ENCODE measurements at regions of chr5 and their contacts with region 1.

Region 1: DNA sequence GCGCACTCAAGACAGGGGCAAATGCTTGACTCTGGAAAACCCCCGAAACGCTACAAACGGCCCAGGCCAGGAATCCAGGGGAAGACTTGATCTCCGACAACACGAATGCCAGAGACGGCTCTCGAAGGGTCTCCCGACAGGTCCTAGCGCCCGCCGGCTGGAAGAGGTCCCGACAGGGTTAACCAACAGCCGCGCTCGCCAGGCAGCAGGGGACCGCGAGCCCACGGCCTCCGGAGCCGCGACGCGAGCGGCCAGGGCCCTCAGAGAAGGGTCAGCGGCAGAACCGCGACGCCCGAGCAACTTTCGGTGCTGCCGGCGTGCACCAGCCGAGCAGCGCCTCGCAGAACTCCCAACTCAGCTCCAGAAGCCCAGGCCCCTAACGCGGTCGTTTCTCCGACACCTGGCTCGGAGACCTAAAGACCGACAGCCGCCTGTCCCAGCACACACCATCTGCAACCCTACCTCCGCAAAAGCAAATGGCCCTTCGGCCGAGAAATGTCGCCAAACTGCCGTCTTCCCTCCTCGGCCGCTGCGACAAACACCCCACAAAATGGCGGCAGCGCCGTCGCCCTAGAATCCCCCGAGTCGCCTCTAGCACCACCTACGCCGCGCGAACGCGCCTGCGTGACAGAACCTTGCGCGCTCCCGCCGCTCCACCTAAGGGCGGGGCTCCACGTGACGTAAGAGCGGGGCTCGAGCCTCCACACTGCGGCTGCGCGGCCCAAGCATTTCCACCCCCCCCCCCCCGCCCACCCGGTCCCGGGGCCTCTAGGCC is at the start of gene CLK4:
- DNase-seq: peak; percentile 96
- H3K4me3 Mint-ChIP-seq: peak within 1 kb of the TSS; percentile 98
- H3K27ac Mint-ChIP-seq: peak within 1 kb of the TSS; percentile 99
- H3K4me1 Mint-ChIP-seq: peaks cover 38% of the 10 kb centered on the region
- H3K27me3 Mint-ChIP-seq: peaks cover 13% of the 10 kb centered on the region
- total RNA-seq, gene CLK4: 27.5 and 28.6 TPM in 2 replicates

Region 2: GRCh38 chr5:178312880-178313282 is 313.8 kb before region 1 on chr5:
- intact Hi-C with region 1: no loop called
- DNase-seq: no peak
- H3K4me3 Mint-ChIP-seq: no peak overlapping the region
- H3K27ac Mint-ChIP-seq: no peak overlapping the region
- H3K4me1 Mint-ChIP-seq: no peaks in the 10 kb centered on the region
- H3K27me3 Mint-ChIP-seq: no peaks in the 10 kb centered on the region

Region 3: DNA sequence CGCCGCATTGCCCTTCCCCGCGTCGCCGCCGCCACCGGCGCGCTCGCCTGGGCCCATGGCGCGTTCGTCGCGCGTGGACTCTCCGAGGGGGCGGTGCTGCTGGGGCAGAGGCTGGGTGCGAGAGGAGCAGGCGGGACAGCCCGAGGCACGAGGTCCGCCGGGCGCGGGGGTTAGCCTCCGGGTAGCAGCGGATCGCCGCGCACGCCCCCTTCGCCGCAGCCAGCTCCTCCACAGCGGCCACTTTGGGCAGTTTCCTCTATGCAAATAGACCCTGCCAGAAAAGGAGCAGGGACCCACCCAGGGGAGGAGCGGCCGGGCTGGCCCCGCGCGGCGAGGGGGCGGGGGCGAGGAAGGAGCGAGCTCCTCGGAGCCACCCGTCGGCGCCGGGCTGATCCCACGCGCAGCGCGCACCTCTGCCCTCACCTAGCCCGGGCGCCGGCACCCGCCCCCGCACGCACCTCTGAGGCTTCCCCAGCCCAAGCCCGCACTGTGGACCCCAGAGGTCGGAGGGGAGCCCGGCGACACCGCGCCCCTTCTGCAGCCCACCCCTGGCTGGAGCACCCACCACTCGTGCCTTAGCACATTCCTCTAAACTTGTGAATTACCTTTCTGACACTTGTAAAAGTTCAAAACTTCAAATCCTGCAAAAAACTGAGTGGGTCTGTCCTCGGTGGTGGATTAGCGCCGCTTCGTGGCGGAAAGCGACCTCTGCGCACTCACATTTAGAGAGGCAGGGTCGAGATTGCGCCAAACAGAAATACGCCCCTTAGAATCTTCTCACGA is 36.3 kb before region 1 on chr5 and contains the start of gene COL23A1:
- intact Hi-C with region 1: loop called (anchors 2 kb)
- DNase-seq: peak; percentile 31
- H3K4me3 Mint-ChIP-seq: peak within 1 kb of the TSS; percentile 75
- H3K27ac Mint-ChIP-seq: no peak within 1 kb of the TSS
- H3K4me1 Mint-ChIP-seq: peaks cover 9% of the 10 kb centered on the region
- H3K27me3 Mint-ChIP-seq: peaks cover 37% of the 10 kb centered on the region
- total RNA-seq, gene COL23A1: not detected in 2 replicates

Region 4: GRCh38 chr5:178612299-178612698 is 14.4 kb before region 1 on chr5:
- intact Hi-C with region 1: no loop called
- DNase-seq: no peak
- H3K4me3 Mint-ChIP-seq: no peak overlapping the region
- H3K27ac Mint-ChIP-seq: peak overlapping the region; percentile 27
- H3K4me1 Mint-ChIP-seq: peaks cover 5% of the 10 kb centered on the region
- H3K27me3 Mint-ChIP-seq: no peaks in the 10 kb centered on the region

Region 5: DNA sequence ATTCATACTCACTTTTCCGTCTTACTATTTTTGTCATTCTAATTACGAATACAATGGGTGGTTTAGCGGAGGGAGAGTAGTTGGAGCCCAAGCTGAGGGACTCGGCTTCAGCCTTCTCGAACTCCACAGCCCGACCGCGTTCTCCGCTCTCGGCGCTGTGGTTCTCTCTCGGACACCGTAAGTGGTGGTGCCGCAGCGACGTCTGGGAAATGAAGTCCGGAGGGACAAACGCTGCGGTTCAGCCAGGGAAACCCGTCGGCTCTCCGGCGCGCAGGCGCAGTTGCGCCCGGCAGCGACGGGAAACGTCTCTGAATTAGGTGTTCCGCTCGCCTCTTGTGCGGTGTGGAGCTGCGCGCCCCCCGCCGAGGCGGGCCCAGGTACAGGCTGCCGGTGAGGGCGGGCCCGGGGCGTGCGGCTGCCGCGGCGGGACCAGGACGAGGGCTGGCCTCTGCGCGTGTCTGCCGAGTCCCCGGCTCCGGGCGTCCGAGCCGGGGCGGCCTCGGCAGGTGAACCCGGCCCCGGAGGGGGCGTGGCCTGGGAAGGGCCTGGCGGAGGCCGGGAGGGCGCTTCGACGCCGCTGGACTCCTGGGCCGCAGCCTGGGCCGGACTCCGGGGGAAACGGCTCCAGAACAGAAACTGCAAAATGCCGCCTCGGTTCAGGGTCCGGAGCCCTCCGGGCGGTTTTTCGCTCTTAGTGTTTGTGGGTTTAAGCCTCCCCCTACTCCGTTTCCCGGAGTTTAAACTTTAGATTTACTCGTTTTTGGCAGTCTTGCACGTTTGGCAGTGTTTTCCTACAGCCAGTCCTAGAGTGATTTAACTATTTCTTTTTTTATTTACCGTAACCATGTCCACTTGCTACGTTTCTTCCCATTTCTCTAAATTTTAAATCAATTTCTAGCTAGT is 397.1 kb after region 1 on chr5 and contains the start of gene ZNF879:
- intact Hi-C with region 1: loop called (anchors 1 kb)
- DNase-seq: peak; percentile 89
- H3K4me3 Mint-ChIP-seq: peak within 1 kb of the TSS; percentile 95
- H3K27ac Mint-ChIP-seq: peak within 1 kb of the TSS; percentile 78
- H3K4me1 Mint-ChIP-seq: peaks cover 10% of the 10 kb centered on the region
- H3K27me3 Mint-ChIP-seq: no peaks in the 10 kb centered on the region
- total RNA-seq, gene ZNF879: 2.2 and 4.2 TPM in 2 replicates

Region 6: GRCh38 chr5:179361037-179361603 is 734.4 kb after region 1 on chr5:
- intact Hi-C with region 1: no loop called
- DNase-seq: no peak
- H3K4me3 Mint-ChIP-seq: no peak overlapping the region
- H3K27ac Mint-ChIP-seq: no peak overlapping the region
- H3K4me1 Mint-ChIP-seq: no peaks in the 10 kb centered on the region
- H3K27me3 Mint-ChIP-seq: no peaks in the 10 kb centered on the region

Region 7: GRCh38 chr5:179550511-179551230 is 924.0 kb after region 1 on chr5 and contains the start of gene RUFY1:
- intact Hi-C with region 1: loop called (anchors 2 kb)
- DNase-seq: peak; percentile 83
- H3K4me3 Mint-ChIP-seq: peak within 1 kb of the TSS; percentile 99
- H3K27ac Mint-ChIP-seq: peak within 1 kb of the TSS; percentile 99
- H3K4me1 Mint-ChIP-seq: peaks cover 28% of the 10 kb centered on the region
- H3K27me3 Mint-ChIP-seq: peaks cover 2% of the 10 kb centered on the region
- total RNA-seq, gene RUFY1: 37.0 and 38.3 TPM in 2 replicates

Region 8: GRCh38 chr5:179732417-179732917 is 1105.8 kb after region 1 on chr5 and contains the start of gene MAML1:
- intact Hi-C with region 1: loop called (anchors 10 kb)
- DNase-seq: peak; percentile 100
- H3K4me3 Mint-ChIP-seq: peak within 1 kb of the TSS; percentile 95
- H3K27ac Mint-ChIP-seq: peak within 1 kb of the TSS; percentile 93
- H3K4me1 Mint-ChIP-seq: peaks cover 26% of the 10 kb centered on the region
- H3K27me3 Mint-ChIP-seq: no peaks in the 10 kb centered on the region
- total RNA-seq, gene MAML1: 36.0 and 37.6 TPM in 2 replicates

Region 9: DNA sequence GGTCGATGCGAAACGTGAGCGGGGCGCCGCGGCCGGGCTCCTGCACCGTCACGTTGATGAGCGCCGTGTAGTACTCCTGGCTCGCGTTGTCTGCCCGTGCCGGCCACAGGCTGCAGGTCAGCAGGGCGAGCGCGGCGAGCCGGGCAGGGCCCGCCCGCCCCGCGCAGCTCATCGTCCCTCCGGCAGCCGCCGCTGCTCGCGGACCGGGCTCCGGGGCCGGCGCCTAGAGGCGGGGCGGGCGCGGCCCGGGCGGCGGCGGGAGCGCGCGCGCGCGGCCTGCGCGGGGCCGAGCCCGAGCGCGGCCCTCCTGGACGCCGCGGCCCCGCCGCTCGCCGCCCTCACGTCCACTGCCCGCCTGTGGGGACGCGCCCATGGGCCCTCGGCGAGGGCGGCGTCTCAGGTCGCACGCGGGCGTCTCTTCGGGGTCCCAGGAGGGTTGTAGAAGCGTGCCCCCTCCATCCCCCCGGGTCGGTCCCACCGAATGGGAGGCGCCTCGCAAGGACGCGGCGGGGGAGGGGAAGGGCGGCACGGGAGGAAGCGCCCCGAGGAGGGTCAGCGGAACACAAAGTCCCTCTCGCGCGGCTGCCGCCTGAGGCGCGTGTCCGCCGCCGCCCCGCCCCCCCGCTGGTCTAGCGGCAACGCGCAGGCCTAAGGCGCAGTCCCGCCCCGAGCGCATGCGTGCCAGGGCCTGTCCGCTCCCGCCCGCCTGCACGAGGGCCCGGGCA is 1445.0 kb after region 1 on chr5 and contains the start of gene RNF130:
- intact Hi-C with region 1: loop called (anchors 5 kb)
- DNase-seq: peak; percentile 76
- H3K4me3 Mint-ChIP-seq: peak within 1 kb of the TSS; percentile 82
- H3K27ac Mint-ChIP-seq: peak within 1 kb of the TSS; percentile 50
- H3K4me1 Mint-ChIP-seq: peaks cover 5% of the 10 kb centered on the region
- H3K27me3 Mint-ChIP-seq: peaks cover 39% of the 10 kb centered on the region
- total RNA-seq, gene RNF130: 7.6 and 7.7 TPM in 2 replicates

Measured in activated T-helper 1 cell treated with anti-CD3 and anti-CD28 coated beads, Interleukin-12 subunit alpha, Interleukin-12 subunit beta, Interleukin-2, Interleukin-4 antibody, amounts not matched to agents 30 ng/mL and 10 ng/mL and 1 ng/mL, durations not matched to agents 14 hours and 24 hours and 36 hours (primary cell).